IMR-90 (cell line): ENCODE measurements at regions of chr6 and their contacts with region 1.

Region 1: GRCh38 chr6:135451693-135452092 is 45.8 kb downstream of the AHI1 start:
- DNase-seq: peak; percentile 43
- ATAC-seq: peak; percentile 29; the same call in 1 of the 2 replicates
- H3K4me3 ChIP-seq: no peak overlapping the region
- H3K27ac ChIP-seq: no peak overlapping the region
- H3K4me1 ChIP-seq: no peaks in the 10 kb centered on the region
- H3K27me3 ChIP-seq: no peaks in the 10 kb centered on the region
- CTCF ChIP-seq: peak; percentile 68
- POLR2A ChIP-seq: no peak
- RAD21 ChIP-seq: peak; percentile 72

Region 2: GRCh38 chr6:135497412-135498269 is 45.9 kb after region 1 on chr6 and contains the start of gene AHI1:
- CTCF ChIA-PET with region 1: no interaction called
- POLR2A ChIA-PET with region 1: no interaction called
- dilution Hi-C with region 1: no loop called
- in situ Hi-C with region 1: no loop called
- intact Hi-C with region 1: loop called (anchors 5 kb)
- DNase-seq: peak; percentile 92
- ATAC-seq: peak; percentile 92
- H3K4me3 ChIP-seq: peak within 1 kb of the TSS; percentile 72
- H3K27ac ChIP-seq: peak within 1 kb of the TSS; percentile 88
- H3K4me1 ChIP-seq: no peaks in the 10 kb centered on the region
- H3K27me3 ChIP-seq: no peaks in the 10 kb centered on the region
- CTCF ChIP-seq: no peak
- POLR2A ChIP-seq: peak; percentile 93
- RAD21 ChIP-seq: no peak
- total RNA-seq, gene AHI1: 19.4 and 25.0 TPM in 2 replicates

Region 3: GRCh38 chr6:135535989-135536414 is 84.3 kb after region 1 on chr6:
- CTCF ChIA-PET with region 1: no interaction called
- POLR2A ChIA-PET with region 1: no interaction called
- dilution Hi-C with region 1: no loop called
- in situ Hi-C with region 1: no loop called
- intact Hi-C with region 1: loop called (anchors 5 kb)
- DNase-seq: peak; percentile 98
- ATAC-seq: peak; percentile 85
- H3K4me3 ChIP-seq: no peak overlapping the region
- H3K27ac ChIP-seq: peak overlapping the region; percentile 24
- H3K4me1 ChIP-seq: peaks cover 9% of the 10 kb centered on the region
- H3K27me3 ChIP-seq: no peaks in the 10 kb centered on the region
- CTCF ChIP-seq: peak; percentile 80
- POLR2A ChIP-seq: no peak
- RAD21 ChIP-seq: peak; percentile 83

Region 4: DNA sequence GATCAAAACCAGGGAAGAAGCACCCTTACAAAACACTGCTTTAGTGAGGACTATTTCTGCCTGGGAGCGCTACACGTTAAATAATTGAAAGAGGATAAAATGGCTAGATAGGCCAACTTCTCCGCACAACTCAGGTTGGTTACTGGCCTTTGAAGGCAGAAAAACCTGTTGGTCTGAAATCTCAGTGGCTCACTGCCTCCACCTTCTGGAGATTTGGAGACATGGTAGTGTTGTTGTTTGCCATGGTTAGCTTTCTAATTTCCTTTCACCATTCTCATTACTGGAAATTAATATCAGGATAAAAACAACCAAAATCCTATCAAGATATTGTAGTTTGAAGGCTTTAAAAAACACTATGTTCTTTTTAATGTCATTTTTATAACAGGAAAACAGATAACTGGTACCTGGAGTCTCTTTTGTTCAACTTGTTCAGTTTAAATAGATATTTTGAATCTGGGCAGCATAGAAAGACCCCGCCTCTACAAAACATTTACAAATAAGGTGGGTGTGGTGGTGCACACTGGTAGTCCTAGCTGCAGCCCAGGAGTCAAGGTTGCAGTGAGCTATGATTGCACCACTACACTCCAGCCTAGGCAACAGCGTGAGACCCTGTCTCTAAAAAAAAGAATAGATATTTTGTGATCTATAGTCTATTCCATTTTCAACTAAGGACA is 865.5 kb after region 1 on chr6:
- CTCF ChIA-PET with region 1: no interaction called
- POLR2A ChIA-PET with region 1: no interaction called
- dilution Hi-C with region 1: no loop called
- in situ Hi-C with region 1: no loop called
- intact Hi-C with region 1: loop called (anchors 2 kb)
- DNase-seq: peak; percentile 69
- ATAC-seq: peak; percentile 96
- H3K4me3 ChIP-seq: no peak overlapping the region
- H3K27ac ChIP-seq: no peak overlapping the region
- H3K4me1 ChIP-seq: no peaks in the 10 kb centered on the region
- H3K27me3 ChIP-seq: peaks cover 7% of the 10 kb centered on the region
- CTCF ChIP-seq: peak; percentile 81
- POLR2A ChIP-seq: no peak
- RAD21 ChIP-seq: peak; percentile 82

Region 5: DNA sequence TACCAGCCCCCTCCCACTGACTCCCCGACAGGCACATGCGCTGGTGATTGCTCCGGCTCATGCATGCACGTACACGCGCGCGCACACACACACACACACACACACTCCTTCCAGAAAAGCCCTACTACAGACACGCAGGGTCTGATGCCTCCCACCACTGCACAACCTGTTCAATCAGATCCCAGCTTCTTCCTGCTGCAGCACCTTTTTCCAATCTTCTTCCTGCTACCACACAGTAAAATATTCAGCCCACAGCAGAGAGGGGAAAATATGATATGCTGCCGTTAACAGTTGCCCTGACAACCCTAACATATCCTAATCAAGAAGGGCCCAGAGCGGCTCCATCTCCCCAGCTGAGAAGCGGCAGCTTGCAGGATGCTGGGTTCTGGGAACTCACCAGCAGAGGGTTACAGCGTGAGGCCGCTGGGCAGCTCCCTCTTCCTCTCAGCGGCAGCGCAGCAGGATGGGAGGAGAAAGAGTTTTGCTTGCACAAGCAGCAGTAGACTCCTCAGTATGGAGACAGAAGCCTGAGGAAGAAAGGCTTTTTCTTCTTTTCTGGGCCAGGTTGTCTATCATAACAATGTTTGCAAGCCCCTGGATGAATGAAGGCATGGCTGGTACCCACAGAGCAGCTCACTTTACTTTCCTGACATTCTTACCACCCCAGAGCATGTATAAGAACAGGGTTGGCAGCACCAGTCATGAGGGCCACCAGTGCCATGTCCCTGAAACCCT is 1074.7 kb after region 1 on chr6:
- CTCF ChIA-PET with region 1: no interaction called
- POLR2A ChIA-PET with region 1: no interaction called
- dilution Hi-C with region 1: no loop called
- in situ Hi-C with region 1: loop called (anchors 25 kb)
- intact Hi-C with region 1: no loop called
- DNase-seq: peak; percentile 63
- ATAC-seq: peak; percentile 98
- H3K4me3 ChIP-seq: no peak overlapping the region
- H3K27ac ChIP-seq: no peak overlapping the region
- H3K4me1 ChIP-seq: no peaks in the 10 kb centered on the region; the same call in 1 of the 2 replicates
- H3K27me3 ChIP-seq: peaks cover 10% of the 10 kb centered on the region
- CTCF ChIP-seq: peak; percentile 39
- POLR2A ChIP-seq: no peak
- RAD21 ChIP-seq: peak; percentile 27

Region 6: GRCh38 chr6:136547336-136547735 is 1095.6 kb after region 1 on chr6:
- CTCF ChIA-PET with region 1: no interaction called
- POLR2A ChIA-PET with region 1: no interaction called
- dilution Hi-C with region 1: no loop called
- in situ Hi-C with region 1: loop called (anchors 25 kb)
- intact Hi-C with region 1: loop called (anchors 5 kb)
- DNase-seq: peak; percentile 63
- ATAC-seq: no peak
- H3K4me3 ChIP-seq: no peak overlapping the region
- H3K27ac ChIP-seq: no peak overlapping the region
- H3K4me1 ChIP-seq: peaks cover 3% of the 10 kb centered on the region; the same call in 1 of the 2 replicates
- H3K27me3 ChIP-seq: peaks cover 42% of the 10 kb centered on the region
- CTCF ChIP-seq: peak; percentile 69
- POLR2A ChIP-seq: no peak
- RAD21 ChIP-seq: peak; percentile 67